ENCODE measurements at regions of chr4 and their contacts with region 1.

Region 1: GRCh38 chr4:145234091-145234706 is 53.8 kb upstream of the OTUD4 start:
- DNase-seq: no peak
- H3K4me3 ChIP-seq: no peak overlapping the region
- H3K27ac ChIP-seq: no peak overlapping the region
- H3K4me1 ChIP-seq: peaks cover 0 to 22% (median 7%) of the 10 kb centered on the region in 4 donors
- H3K27me3 ChIP-seq: no peaks in the 10 kb centered on the region
- CTCF ChIP-seq: peak; percentile 71 to 76 (median 75)
- EP300 ChIP-seq: no peak
- POLR2A ChIP-seq: no peak

Region 2: GRCh38 chr4:145375416-145375815 is 141.2 kb after region 1 on chr4:
- intact Hi-C with region 1: no loop called
- DNase-seq: no peak
- H3K4me3 ChIP-seq: no peak overlapping the region
- H3K27ac ChIP-seq: no peak overlapping the region
- H3K4me1 ChIP-seq: no peaks in the 10 kb centered on the region
- H3K27me3 ChIP-seq: no peaks in the 10 kb centered on the region
- CTCF ChIP-seq: no peak
- EP300 ChIP-seq: no peak
- POLR2A ChIP-seq: no peak

Region 3: DNA sequence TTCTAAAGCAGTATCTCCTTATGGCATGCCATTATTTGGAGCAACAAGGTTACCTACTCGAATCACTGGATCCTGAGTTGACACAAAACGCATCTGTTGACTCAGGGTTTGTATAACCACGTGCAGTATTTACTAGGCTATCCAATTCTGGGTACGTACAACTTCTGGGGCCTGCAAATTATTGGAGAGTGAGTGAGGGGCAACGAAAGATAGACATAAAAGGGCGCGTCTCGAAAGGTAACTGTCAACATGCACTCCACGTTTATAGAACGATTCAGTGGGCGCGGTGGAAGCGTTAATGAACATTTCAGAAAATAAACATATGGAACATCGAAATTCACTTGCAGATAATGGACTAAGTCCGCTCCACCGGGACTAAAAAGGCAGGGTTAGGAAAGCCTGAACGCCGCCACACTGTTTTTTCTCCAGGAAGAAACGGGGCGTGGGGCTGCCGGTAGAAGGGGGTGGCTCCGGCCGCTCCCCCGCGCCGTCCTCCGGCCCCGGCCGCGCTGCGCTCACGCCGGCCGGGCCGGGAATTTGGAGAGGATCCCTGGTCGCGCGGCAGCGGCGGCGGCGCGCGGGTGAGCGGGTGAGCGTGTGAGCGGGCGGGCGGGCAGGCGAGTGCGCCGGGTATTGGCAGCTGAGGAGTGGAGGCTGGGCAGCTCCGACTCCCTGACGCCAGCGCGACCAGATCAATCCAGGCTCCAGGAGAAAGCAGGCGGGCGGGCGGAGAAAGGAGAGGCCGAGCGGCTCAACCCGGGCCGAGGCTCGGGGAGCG is 247.2 kb after region 1 on chr4 and contains the start of gene SMAD1:
- intact Hi-C with region 1: loop called (anchors 10 kb)
- DNase-seq: peak; percentile 93
- H3K4me3 ChIP-seq: peak within 1 kb of the TSS; percentile 76 to 99 (median 96)
- H3K27ac ChIP-seq: peak within 1 kb of the TSS; percentile 95 to 99 (median 96)
- H3K4me1 ChIP-seq: peaks cover 15 to 43% (median 40%) of the 10 kb centered on the region in 4 donors
- H3K27me3 ChIP-seq: no peaks in the 10 kb centered on the region
- CTCF ChIP-seq: no peak
- EP300 ChIP-seq: no peak
- POLR2A ChIP-seq: peak; percentile 62
- total RNA-seq, gene SMAD1: 19.5 to 34.3 (median 29.2) TPM

Measured in esophagus muscularis mucosa (tissue), 4 donors.